Caco-2 (cell line): ENCODE measurements at regions of chr4 and their contacts with region 1.

Region 1: DNA sequence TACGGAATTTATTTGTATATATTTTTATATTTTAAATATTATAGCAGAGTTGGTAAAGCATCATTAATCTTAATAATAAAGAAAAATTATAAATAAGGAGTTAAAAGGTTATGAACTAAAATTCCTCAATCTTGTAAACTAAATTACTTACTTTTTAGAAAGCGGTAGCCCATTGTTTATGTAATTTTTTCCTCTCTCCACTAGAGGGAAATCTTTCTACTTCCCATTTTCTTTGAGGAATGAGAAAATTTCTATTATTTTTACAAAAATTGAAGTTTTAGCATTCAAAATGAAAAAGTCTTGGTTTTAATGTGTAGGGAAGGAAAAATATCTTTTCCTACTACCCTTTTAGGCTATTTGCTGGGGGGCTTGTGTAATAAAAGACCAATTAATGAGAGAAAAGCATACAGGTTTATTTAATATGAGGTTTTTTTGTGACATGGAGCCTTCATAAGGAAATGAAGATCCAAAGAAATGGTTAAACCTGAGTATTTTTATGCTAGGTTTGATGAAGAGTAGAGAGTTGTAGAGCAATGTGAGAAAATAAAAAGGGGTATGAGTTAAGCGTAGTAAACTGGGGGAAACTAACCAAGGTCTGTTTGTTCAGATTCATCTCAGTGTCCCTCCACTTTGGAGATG is 68.7 kb upstream of the ADAD1 start:
- DNase-seq: no peak
- H3K4me3 ChIP-seq: no peak overlapping the region
- H3K4me3 Mint-ChIP-seq: no peak overlapping the region
- H3K27ac Mint-ChIP-seq: no peak overlapping the region
- H3K4me1 ChIP-seq: no peaks in the 10 kb centered on the region
- H3K4me1 Mint-ChIP-seq: no peaks in the 10 kb centered on the region
- H3K27me3 ChIP-seq: no peaks in the 10 kb centered on the region
- H3K27me3 Mint-ChIP-seq: no peaks in the 10 kb centered on the region
- CTCF ChIP-seq: peak in 1 of 2 experiments; percentile 47

Region 2: DNA sequence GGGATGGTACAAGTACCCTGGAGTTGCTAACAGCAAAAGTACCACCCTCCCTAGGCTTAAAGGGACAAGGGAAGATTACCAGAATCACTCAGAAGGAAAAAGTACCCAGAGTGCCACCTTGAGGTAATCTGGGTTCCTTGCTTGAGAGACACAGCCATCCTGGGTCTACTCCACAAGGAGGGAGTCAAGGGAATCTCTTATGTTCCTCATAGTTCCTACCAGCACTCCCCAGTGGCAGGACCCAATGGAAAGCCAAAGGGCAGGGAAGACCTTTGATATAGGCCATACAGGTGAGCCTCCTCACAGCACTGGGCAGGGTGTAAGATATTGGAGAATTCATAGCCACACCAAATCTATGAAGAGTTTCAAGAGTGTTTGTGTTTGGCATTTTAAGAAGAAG is 140.7 kb after region 1 on chr4:
- CTCF ChIA-PET with region 1: no interaction called
- POLR2A ChIA-PET with region 1: no interaction called
- intact Hi-C with region 1: loop called (anchors 2 kb)
- DNase-seq: peak; percentile 36 to 42
- H3K4me3 ChIP-seq: no peak overlapping the region
- H3K4me3 Mint-ChIP-seq: no peak overlapping the region
- H3K27ac Mint-ChIP-seq: no peak overlapping the region
- H3K4me1 ChIP-seq: no peaks in the 10 kb centered on the region
- H3K4me1 Mint-ChIP-seq: no peaks in the 10 kb centered on the region
- H3K27me3 ChIP-seq: no peaks in the 10 kb centered on the region
- H3K27me3 Mint-ChIP-seq: no peaks in the 10 kb centered on the region
- CTCF ChIP-seq: peak in 1 of 2 experiments; percentile 36